ENCODE measurements at regions of chr15 and their contacts with region 1.

Region 1: GRCh38 chr15:77633134-77633912 is 611 bp upstream of the LINGO1 start:
- DNase-seq: peak; percentile 98
- ATAC-seq: peak; percentile 63
- H3K4me3 Mint-ChIP-seq: peak overlapping the region; percentile 63
- H3K27ac Mint-ChIP-seq: peak overlapping the region; percentile 86
- H3K4me1 Mint-ChIP-seq: peaks cover 57% of the 10 kb centered on the region
- H3K27me3 Mint-ChIP-seq: peaks cover 7% of the 10 kb centered on the region
- CTCF ChIP-seq: peak; percentile 92

Region 2: DNA sequence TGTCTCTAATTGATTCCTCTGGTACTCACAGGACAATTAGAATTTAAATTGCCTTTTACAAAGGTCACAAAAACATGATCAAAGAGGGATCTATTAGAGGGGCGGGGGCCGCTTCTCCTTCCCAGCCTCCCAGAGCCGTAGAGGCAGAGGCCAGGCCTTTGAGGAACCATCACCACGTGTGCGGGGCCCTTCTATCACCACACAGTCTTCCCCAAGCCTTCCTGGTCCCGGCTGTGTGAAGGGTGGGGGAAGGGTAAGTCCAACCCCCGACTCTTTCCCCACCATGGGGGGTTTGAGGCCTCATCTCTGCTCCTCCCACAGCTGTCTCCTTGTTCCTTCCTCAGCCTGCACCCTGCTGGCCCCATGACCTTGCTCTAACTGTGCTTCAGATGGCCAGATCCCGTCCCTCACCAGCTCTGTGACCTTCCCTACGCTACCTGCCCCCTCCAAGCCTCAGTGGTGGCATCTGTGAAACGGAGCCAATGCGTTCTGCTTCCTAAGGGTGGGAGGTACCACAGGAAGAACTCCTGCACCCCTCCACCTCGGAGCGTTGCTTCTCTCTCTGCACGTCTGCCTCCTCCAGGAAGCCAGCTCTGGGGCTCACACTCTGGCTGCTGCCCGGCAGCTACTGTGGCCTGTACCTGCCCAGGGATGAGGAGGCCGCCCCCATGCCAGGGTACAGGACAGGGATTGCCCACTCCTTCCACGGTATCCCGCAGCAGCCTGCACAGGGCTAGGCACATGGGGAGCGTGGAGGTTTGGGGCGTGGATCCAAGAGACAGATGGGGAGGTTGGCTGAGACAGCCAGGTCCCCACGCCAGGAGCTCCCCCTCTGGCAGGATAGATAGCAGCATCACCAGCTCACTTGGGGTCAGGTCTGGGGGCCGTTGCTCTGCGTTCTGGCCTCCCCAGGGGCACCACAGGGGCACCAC is 84.5 kb before region 1 on chr15:
- CTCF ChIA-PET with region 1: interaction called, 29 read pairs
- POLR2A ChIA-PET with region 1: interaction called, 4 read pairs
- DNase-seq: no peak
- ATAC-seq: peak; percentile 55
- H3K4me3 Mint-ChIP-seq: no peak overlapping the region
- H3K27ac Mint-ChIP-seq: no peak overlapping the region; the same call in 1 of the 2 replicates
- H3K4me1 Mint-ChIP-seq: peaks cover 13% of the 10 kb centered on the region
- H3K27me3 Mint-ChIP-seq: peaks cover 3% of the 10 kb centered on the region
- CTCF ChIP-seq: no peak

Region 3: GRCh38 chr15:77599899-77600298 is 33.4 kb before region 1 on chr15:
- CTCF ChIA-PET with region 1: interaction called, 195 read pairs
- POLR2A ChIA-PET with region 1: no interaction called
- DNase-seq: peak; percentile 53
- ATAC-seq: peak; percentile 53
- H3K4me3 Mint-ChIP-seq: no peak overlapping the region
- H3K27ac Mint-ChIP-seq: peak overlapping the region; percentile 95
- H3K4me1 Mint-ChIP-seq: peaks cover 37% of the 10 kb centered on the region
- H3K27me3 Mint-ChIP-seq: no peaks in the 10 kb centered on the region; the same call in 1 of the 2 replicates
- CTCF ChIP-seq: no peak

Region 4: DNA sequence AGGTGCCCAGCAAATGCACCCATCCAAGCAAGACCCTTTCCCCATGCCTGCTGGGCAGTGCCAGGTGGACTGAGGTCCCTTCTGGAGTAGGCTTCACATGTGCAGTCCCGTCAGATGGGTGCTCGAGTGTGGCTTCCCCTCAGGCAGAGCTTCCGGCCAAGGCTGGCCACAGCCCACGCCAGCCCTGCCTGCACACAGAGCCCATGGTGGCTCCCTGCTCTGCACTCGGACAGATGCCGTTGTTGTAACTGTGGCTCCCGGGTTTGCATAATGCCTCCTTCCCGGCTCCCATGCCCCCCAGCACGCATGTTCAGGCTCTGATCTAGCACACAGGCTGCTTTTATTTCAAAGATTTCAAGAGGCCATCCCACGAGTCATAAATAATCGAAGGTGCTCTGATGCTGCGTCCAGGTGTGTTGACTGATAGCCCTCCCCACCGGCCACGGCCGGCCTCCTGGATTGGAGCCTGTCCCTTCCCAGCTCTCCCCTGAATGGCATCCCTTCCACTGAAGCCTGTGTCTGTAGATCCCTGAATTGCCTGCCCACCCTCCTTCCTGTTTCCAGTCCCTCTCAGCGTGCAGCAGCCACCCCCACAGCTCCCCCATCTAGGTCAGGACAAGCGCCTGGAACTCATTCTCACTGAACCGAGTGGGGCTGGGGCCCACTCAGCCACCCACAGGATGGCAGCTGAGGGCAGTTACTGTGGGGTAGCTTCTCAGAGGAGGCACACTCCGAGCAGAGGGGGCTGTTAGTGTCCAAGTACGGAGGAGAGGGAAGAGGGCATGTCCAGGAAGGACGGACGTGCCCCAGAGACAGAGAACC is 99.4 kb after region 1 on chr15:
- CTCF ChIA-PET with region 1: interaction called, 11 read pairs
- POLR2A ChIA-PET with region 1: no interaction called
- DNase-seq: no peak
- ATAC-seq: no peak
- H3K4me3 Mint-ChIP-seq: no peak overlapping the region
- H3K27ac Mint-ChIP-seq: no peak overlapping the region
- H3K4me1 Mint-ChIP-seq: peaks cover 19% of the 10 kb centered on the region
- H3K27me3 Mint-ChIP-seq: no peaks in the 10 kb centered on the region; the same call in 1 of the 2 replicates
- CTCF ChIP-seq: no peak

Region 5: DNA sequence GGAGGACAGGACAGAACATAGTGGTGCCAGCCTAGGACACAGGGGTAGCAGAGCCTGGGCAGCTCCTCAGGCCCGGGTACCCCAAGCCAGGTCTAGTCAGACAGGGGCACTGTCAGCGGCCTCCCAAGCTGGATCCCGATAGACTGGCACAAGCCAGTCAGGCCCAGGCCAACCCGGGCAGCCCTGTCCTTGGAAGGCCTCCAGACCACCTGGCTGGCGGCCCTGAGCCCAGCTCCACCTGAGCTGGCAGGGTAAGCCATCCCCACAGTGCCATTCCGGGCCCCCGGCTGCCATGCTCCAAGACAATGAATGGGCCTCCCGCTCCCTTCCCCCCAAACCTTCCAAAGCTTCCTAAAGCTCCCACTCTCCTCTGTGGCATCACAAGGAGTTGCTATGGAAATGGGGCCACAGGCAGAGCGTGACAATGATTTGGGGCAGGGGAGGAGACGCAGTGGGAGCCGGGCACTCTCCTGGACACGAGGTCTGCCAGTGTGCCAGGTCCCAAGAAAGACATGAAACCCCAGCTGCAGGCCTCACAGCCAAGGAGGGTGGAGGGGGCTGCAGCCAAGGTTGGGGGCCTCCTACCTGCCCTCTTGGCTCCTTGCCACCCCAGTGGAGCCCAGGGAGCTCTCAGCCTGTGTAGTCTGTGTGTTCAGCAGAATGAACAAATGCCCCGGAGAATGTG is 165.0 kb after region 1 on chr15:
- CTCF ChIA-PET with region 1: interaction called, 12 read pairs
- POLR2A ChIA-PET with region 1: no interaction called
- DNase-seq: no peak
- ATAC-seq: no peak
- H3K4me3 Mint-ChIP-seq: no peak overlapping the region
- H3K27ac Mint-ChIP-seq: no peak overlapping the region
- H3K4me1 Mint-ChIP-seq: peaks cover 14% of the 10 kb centered on the region
- H3K27me3 Mint-ChIP-seq: no peaks in the 10 kb centered on the region
- CTCF ChIP-seq: no peak

Region 6: GRCh38 chr15:77844798-77845446 is 211.6 kb after region 1 on chr15:
- CTCF ChIA-PET with region 1: no interaction called
- POLR2A ChIA-PET with region 1: no interaction called
- DNase-seq: no peak
- ATAC-seq: no peak
- H3K4me3 Mint-ChIP-seq: no peak overlapping the region
- H3K27ac Mint-ChIP-seq: no peak overlapping the region
- H3K4me1 Mint-ChIP-seq: peaks cover 6% of the 10 kb centered on the region
- H3K27me3 Mint-ChIP-seq: peaks cover 8% of the 10 kb centered on the region
- CTCF ChIP-seq: no peak

Region 7: DNA sequence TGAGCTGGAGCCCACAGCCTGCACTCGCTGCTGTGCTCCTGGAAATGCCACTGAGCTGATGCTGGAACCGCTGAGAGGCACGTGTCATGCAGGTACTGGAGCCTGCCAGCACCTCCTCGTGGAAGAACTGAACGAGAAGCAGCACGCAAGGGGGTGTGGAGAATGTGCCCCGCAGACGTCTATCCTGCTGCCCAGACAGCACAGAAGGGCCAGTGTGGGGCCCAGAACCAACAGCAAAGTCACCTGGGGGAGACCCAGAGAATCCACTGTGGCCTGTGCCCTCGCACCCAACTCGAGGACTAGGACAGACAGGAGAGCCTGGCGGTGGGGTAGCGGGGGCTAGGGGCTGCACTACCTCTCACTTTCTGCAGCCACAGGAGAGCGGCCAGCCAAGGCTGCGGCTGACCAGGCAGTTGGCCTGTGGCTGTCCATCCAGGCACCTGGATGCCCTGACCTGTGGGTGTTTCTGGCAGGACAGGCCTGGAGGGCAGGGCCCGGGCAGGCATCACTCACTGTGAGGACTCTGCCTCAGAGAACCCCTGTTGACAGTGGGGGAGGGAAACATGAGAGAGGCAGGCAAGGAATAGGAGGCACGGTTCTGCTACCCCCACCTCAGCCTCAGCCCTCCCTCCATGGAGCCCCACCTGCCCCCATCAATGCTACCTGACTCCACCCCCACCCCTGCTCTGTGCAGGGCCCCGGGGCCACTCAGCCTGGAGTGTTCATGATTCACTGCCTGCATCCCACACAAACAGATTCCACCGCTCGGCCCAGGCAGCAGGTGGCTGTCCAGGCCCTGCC is 231.2 kb after region 1 on chr15:
- CTCF ChIA-PET with region 1: interaction called, 11 read pairs
- POLR2A ChIA-PET with region 1: no interaction called
- DNase-seq: no peak
- ATAC-seq: peak; percentile 23
- H3K4me3 Mint-ChIP-seq: no peak overlapping the region
- H3K27ac Mint-ChIP-seq: no peak overlapping the region
- H3K4me1 Mint-ChIP-seq: peaks cover 13% of the 10 kb centered on the region
- H3K27me3 Mint-ChIP-seq: no peaks in the 10 kb centered on the region; the same call in 1 of the 2 replicates
- CTCF ChIP-seq: no peak

Measured in WTC11 (cell line).